ENCODE measurements at regions of chrX and their contacts with region 1.

Region 1: GRCh38 chrX:119693040-119693995 is at the start of gene SEPTIN6:
- DNase-seq: peak; percentile 63 to 92 (median 86)
- ATAC-seq: peak; percentile 64
- H3K4me3 ChIP-seq: peak within 1 kb of the TSS; percentile 74 to 78
- H3K4me3 Mint-ChIP-seq: peak within 1 kb of the TSS; percentile 97
- H3K27ac ChIP-seq: peak within 1 kb of the TSS; percentile 82 to 99
- H3K27ac Mint-ChIP-seq: peak within 1 kb of the TSS; percentile 99
- H3K4me1 ChIP-seq: peaks cover 15% of the 10 kb centered on the region
- H3K4me1 Mint-ChIP-seq: peaks cover 17% of the 10 kb centered on the region
- H3K27me3 ChIP-seq: no peaks in the 10 kb centered on the region
- H3K27me3 Mint-ChIP-seq: no peaks in the 10 kb centered on the region
- CTCF ChIP-seq: no peak
- total RNA-seq, gene SEPTIN6: 136 to 138 TPM

Region 2: DNA sequence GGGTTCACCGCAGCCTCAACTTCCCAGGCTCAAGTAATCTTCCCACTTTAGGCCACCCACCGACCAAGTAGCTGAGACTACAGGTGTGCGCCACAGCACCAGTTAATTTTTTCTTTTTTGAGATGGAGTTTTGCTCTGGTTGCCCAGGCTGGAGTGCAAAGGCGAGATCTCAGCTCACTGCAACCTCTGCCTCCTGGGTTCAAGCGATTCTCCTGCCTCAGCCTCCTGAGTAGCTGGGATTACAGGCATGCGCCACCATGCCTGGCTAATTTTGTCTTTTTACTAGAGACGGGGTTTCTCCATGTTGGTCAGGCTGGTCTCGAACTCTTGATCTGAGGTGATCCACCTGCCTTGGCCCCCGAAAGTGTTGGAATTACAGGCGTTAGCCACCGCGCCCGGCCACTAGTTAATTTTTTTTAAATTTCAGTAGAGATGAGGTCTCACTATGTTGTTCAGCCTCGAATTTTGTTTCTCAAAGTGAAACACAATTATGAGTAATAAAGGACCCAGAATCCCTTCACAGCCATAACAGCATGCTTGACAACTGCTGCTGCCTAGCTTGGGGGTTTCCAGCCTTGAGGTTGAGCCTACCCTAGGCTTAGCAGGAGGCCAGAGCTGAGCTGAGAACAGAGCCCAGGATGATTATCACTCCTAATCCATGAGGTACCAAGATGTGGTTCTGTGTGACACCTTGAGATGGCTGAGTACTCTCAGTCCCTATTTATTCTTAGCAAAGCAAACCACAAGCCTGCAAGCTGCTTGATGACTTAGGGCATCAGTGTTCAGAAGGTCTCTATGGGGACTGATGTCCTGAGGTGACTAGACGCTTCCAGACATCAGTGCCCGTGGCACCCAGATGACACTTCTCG is 45.5 kb before region 1 on chrX:
- CTCF ChIA-PET with region 1: no interaction called
- POLR2A ChIA-PET with region 1: interaction called, 5 read pairs
- intact Hi-C with region 1: loop called (anchors 2 to 5 kb)
- DNase-seq: peak in 7 of 9 experiments; percentile 3 to 85 (median 39)
- ATAC-seq: peak; percentile 87
- H3K4me3 ChIP-seq: no peak overlapping the region
- H3K4me3 Mint-ChIP-seq: peak overlapping the region; percentile 29
- H3K27ac ChIP-seq: peak overlapping the region in 1 of 2 experiments; percentile 51
- H3K27ac Mint-ChIP-seq: peak overlapping the region; percentile 85
- H3K4me1 ChIP-seq: peaks cover 15% of the 10 kb centered on the region
- H3K4me1 Mint-ChIP-seq: peaks cover 26% of the 10 kb centered on the region
- H3K27me3 ChIP-seq: no peaks in the 10 kb centered on the region
- H3K27me3 Mint-ChIP-seq: no peaks in the 10 kb centered on the region
- CTCF ChIP-seq: no peak

Region 3: DNA sequence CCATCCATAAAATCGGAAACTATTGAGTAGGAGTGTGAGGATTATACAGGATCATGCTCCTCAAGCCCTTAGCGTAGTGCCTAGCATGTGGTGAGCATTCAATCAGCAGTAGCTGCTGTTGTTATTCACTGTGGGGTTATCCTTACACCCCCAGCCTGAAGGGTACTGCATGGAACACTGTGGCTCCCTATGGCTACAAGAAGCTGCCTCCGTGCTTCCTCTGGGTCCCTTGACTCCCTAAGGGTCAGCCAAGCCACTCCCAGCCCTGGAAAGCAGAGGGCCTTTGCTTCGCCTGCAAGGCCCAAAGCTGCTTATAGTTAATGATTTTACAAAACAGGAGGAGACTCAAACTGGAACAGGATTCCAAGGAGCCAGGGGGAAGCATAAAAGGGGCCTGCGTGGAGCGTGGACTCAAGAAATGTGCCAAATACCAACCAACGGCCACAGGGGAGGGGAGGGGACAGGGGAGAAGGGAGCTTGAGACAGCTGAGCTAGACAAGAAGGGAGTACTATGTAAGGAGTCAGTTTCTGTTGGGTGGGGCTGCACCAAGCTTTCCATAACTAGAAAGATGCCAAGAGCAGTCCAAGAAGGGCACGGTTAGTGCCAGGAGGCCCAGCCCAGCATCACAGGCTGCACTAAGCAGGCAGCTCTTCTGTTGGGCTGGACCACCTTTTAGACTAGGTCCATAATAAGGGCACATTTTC is 16.2 kb before region 1 on chrX:
- CTCF ChIA-PET with region 1: interaction called, 7 read pairs
- POLR2A ChIA-PET with region 1: interaction called, 87 read pairs
- intact Hi-C with region 1: loop called (anchors 1 to 2 kb)
- DNase-seq: no peak
- ATAC-seq: peak; percentile 3
- H3K4me3 ChIP-seq: peak overlapping the region; percentile 24 to 41
- H3K4me3 Mint-ChIP-seq: peak overlapping the region; percentile 81
- H3K27ac ChIP-seq: peak overlapping the region; percentile 42 to 77
- H3K27ac Mint-ChIP-seq: peak overlapping the region; percentile 93
- H3K4me1 ChIP-seq: peaks cover 68% of the 10 kb centered on the region
- H3K4me1 Mint-ChIP-seq: peaks cover 59% of the 10 kb centered on the region
- H3K27me3 ChIP-seq: no peaks in the 10 kb centered on the region
- H3K27me3 Mint-ChIP-seq: no peaks in the 10 kb centered on the region
- CTCF ChIP-seq: no peak

Region 4: GRCh38 chrX:119753571-119754257 is 60.4 kb after region 1 on chrX:
- CTCF ChIA-PET with region 1: interaction called, 3 read pairs
- POLR2A ChIA-PET with region 1: interaction called, 10 read pairs
- intact Hi-C with region 1: loop called (anchors 1 to 5 kb)
- DNase-seq: peak in 8 of 9 experiments; percentile 15 to 88 (median 56)
- ATAC-seq: peak; percentile 64
- H3K4me3 ChIP-seq: no peak overlapping the region
- H3K4me3 Mint-ChIP-seq: peak overlapping the region; percentile 61
- H3K27ac ChIP-seq: peak overlapping the region; percentile 37 to 77
- H3K27ac Mint-ChIP-seq: peak overlapping the region; percentile 97
- H3K4me1 ChIP-seq: peaks cover 44% of the 10 kb centered on the region
- H3K4me1 Mint-ChIP-seq: peaks cover 47% of the 10 kb centered on the region
- H3K27me3 ChIP-seq: no peaks in the 10 kb centered on the region
- H3K27me3 Mint-ChIP-seq: no peaks in the 10 kb centered on the region
- CTCF ChIP-seq: peak; percentile 58

Region 5: DNA sequence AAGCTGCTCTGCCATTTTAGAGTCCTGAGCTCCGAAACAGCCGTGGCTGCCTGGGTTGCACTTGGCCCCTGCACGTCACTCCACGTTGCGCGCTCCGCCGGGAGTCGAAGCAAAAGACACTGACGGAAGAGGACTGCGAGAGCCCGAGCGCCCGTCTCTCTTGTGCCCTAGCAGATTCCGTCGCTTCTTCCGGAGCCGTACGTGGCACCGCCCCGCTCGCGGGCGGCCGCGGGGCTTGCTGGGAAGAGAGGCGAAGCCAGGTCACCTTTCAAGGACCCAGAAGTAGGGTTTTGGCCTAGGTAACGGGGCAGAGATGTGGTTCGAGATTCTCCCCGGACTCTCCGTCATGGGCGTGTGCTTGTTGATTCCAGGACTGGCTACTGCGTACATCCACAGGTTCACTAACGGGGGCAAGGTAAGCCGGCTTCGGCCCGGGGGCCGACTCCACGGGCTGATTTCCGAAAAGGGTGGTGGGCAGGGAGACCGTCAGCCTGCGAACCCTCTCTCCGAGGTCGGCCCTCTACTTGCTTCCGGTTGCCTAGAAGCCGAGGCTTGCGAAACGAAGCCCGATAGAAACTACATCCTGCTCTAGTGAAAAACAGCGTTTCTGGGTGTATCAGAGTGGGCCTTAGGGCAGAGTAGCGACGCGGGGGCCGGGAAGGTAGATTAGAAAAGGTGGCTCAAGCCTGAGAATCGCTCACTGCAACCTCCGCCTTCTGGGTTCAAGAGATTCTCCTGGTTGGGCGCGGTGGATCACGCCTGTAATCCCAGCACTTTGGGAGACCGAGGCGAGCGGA is 178.5 kb after region 1 on chrX and contains the starts of genes NDUFA1 and RNF113A:
- CTCF ChIA-PET with region 1: no interaction called
- POLR2A ChIA-PET with region 1: no interaction called
- intact Hi-C with region 1: loop called in 1 of 2 experiments (anchors 1 kb)
- DNase-seq: peak; percentile 69 to 94 (median 81)
- ATAC-seq: peak; percentile 87
- H3K4me3 ChIP-seq: peak within 1 kb of the TSS; percentile 77 to 80
- H3K4me3 Mint-ChIP-seq: peak within 1 kb of the TSS; percentile 97
- H3K27ac ChIP-seq: peak within 1 kb of the TSS; percentile 95 to 97
- H3K27ac Mint-ChIP-seq: peak within 1 kb of the TSS; percentile 99
- H3K4me1 ChIP-seq: peaks cover 7% of the 10 kb centered on the region
- H3K4me1 Mint-ChIP-seq: peaks cover 27% of the 10 kb centered on the region
- H3K27me3 ChIP-seq: no peaks in the 10 kb centered on the region
- H3K27me3 Mint-ChIP-seq: no peaks in the 10 kb centered on the region
- CTCF ChIP-seq: no peak
- total RNA-seq, gene NDUFA1: 48.3 to 51.0 TPM
- total RNA-seq, gene RNF113A: 27.8 to 29.4 TPM

Measured in CD8-positive, alpha-beta T cell (primary cell).